ENCODE measurements at regions of chr7 and their contacts with region 1.

Region 1: DNA sequence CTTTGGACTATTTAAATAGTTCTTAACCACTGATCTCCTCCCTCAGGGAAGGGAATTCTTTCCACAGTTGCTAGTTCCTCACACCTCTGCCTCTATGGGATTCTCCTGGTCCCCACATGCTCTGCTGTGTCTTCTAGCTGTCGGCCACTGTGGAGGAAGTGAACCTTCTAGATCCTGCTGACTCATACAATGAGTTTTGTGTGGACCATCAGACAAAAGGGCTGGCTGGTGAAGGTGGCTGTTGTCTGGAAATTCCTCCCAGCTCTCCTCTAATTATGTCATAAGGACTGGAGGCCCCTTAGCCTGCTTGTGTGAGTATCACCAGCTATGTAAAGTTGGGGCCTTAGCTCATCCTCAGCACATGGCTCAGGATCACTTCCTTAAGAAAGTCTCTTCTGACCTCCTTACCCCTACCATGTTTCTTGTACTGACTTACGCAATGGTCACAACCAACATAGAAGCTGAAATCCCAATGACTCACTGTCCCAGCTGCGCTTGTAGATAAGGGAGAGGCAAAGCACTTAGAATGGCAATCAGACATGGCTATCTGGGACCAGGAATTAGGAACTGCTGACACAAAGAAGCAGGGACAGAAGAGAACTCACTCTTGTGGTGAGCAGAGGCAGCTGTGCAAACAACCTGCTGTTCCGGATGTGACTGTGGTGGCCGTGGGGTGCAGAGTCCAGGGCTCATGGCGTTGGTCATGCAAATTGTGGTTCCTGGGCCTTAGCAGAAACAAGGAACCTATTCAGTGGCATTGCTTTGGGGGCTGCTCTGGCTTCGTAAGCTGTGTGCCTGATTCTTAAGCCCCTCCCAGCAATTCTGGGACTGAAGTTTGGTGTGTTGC is 2.5 kb upstream of the MACC1 start:
- DNase-seq: peak; percentile 54
- CTCF ChIP-seq: no peak

Region 2: DNA sequence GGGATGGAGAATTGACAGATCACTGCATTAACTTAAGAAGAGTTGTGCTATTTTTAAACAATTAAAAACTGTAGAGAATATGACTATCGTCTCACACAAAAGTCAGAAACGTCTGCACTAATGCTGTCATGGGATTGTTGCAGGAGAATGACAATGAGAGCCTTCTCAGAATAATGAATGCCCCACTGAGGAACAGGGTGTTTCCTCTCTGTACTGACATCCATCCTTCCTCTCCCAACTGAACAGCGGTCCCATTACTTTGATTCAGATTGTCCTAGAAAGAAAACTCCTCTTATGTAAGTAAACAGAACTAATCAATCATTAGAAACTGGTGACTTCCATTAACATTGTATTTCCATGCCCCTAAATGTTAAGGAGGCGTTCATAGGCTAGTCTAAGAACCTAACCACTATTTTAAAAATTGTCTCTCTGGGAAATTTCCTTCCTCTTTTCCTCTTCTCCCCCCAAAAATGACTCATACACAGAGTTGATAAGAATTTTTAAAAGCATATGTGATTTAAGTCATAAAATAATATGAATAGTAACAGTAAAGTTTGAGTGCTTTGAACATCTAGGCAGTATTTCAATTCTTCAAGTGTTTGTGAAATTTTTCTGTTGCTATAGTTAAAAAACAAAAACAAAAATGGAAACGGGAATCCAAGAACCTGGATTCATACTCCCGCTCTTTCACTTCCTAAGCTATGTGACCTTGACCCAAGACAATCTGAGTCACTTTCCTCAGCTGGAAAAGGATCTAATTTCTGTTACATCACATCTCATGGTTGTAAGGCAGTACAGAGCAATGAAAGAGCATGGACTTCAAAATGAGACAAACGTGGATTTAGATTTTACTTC is 10.2 kb after region 1 on chr7:
- CTCF ChIA-PET with region 1: interaction called, 85 read pairs
- POLR2A ChIA-PET with region 1: interaction called, 3 read pairs
- DNase-seq: no peak
- CTCF ChIP-seq: no peak

Region 3: DNA sequence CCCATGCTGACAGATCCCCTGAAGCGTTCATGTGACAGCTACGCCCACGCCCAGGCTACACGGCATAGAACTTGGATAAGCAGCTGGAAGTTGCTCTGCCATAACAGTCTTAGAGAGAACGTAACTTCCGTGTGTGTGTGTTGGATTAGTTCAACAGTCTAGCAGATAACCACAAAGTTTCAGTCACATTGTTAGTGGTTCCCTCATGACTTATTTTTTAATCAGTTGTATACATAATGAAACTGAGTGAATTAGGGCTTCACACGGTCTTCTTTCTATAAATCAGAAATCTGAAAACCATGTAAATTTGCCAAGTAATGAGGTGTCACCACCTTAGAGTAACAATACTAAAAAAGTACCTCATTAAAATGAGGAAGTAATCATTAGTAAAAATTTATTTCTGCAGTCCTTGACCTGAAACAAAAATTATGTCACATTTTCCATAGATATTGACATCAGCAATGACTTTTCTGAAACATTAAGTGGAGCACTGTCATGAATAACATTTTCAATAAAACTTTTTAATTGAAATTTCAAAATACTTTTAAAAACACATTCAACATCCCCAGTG is 19.2 kb after region 1 on chr7:
- CTCF ChIA-PET with region 1: interaction called, 85 read pairs
- POLR2A ChIA-PET with region 1: interaction called, 45 read pairs
- DNase-seq: peak; percentile 35
- CTCF ChIP-seq: no peak